Panc1 (cell line): ENCODE measurements at regions of chr15 and their contacts with region 1.

Region 1: DNA sequence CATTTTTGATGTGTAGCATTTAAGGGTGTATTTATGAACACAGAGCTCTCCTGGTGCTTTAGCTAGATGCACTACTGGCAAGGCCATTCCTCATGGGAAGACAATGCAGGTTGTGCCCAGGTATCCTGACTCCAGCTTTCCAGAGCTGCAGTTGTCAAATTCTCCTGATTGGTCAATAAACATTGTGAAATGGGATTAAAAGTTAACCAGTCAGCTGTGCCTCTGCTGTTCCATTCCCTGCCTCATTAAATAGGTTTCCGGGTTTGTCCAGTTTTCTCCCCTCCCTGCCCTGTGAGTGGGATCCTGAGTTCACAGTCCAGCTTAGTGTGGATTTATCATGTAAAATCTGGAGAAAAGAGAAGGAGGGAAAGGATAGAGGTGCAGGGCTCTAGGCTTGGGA is 207.3 kb downstream of the SQOR start:
- DNase-seq: no peak
- ATAC-seq: no peak
- H3K4me3 ChIP-seq: no peak overlapping the region
- H3K27ac ChIP-seq: no peak overlapping the region
- H3K4me1 ChIP-seq: no peaks in the 10 kb centered on the region
- H3K27me3 ChIP-seq: no peaks in the 10 kb centered on the region
- CTCF ChIP-seq: no peak

Region 2: GRCh38 chr15:46768287-46768686 is 926.1 kb after region 1 on chr15:
- CTCF ChIA-PET with region 1: no interaction called
- POLR2A ChIA-PET with region 1: interaction called, 11 read pairs
- in situ Hi-C with region 1: no loop called
- intact Hi-C with region 1: no loop called
- DNase-seq: no peak
- ATAC-seq: no peak
- H3K4me3 ChIP-seq: no peak overlapping the region
- H3K27ac ChIP-seq: no peak overlapping the region
- H3K4me1 ChIP-seq: no peaks in the 10 kb centered on the region
- H3K27me3 ChIP-seq: no peaks in the 10 kb centered on the region
- CTCF ChIP-seq: no peak